CD4-positive, alpha-beta T cell (primary cell): ENCODE measurements at regions of chr3 and their contacts with region 1.

Region 1: GRCh38 chr3:28328188-28329151 is 20.1 kb upstream of the ZCWPW2 start:
- DNase-seq: peak in 3 of 14 experiments; percentile 63 to 68 (median 68)
- ATAC-seq: peak; percentile 43
- H3K4me3 ChIP-seq: no peak overlapping the region
- H3K4me3 Mint-ChIP-seq: no peak overlapping the region
- H3K27ac ChIP-seq: no peak overlapping the region
- H3K27ac Mint-ChIP-seq: no peak overlapping the region
- H3K4me1 ChIP-seq: no peaks in the 10 kb centered on the region
- H3K4me1 Mint-ChIP-seq: peaks cover 20% of the 10 kb centered on the region
- H3K27me3 ChIP-seq: no peaks in the 10 kb centered on the region
- H3K27me3 Mint-ChIP-seq: no peaks in the 10 kb centered on the region
- CTCF ChIP-seq: peak; percentile 83

Region 2: DNA sequence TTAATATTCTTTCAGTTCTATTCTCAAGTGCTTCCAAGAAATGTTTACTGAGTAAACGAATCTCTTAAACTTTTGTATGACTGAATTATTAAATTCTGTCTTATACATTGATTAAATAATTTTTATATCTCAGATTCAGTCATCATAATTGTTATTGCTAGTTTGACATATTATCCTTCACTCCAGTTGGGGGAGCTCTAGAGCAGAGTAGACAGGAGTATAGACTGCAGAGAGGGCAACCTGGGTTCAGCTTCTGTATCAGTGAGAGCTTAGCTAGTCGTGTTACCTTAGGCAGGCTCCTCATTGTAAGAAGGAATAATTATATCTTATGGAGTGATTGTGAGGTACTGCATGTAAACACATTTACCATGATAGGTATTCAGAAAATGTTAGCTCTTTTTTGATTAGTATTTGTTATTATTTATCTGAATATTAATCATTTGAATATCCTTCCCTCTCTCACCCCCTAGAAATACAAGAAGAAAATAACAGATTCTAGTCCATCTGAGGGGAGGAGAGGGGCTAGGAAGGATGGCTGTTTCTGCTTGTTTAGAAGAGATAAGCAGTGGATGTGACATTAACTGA is 10.9 kb before region 1 on chr3:
- CTCF ChIA-PET with region 1: interaction called, 25 read pairs
- POLR2A ChIA-PET with region 1: interaction called, 6 read pairs
- intact Hi-C with region 1: no loop called
- DNase-seq: peak in 8 of 14 experiments; percentile 1 to 77 (median 27)
- ATAC-seq: peak; percentile 99
- H3K4me3 ChIP-seq: no peak overlapping the region
- H3K4me3 Mint-ChIP-seq: no peak overlapping the region
- H3K27ac ChIP-seq: no peak overlapping the region
- H3K27ac Mint-ChIP-seq: peak overlapping the region; percentile 20
- H3K4me1 ChIP-seq: no peaks in the 10 kb centered on the region
- H3K4me1 Mint-ChIP-seq: peaks cover 5% of the 10 kb centered on the region
- H3K27me3 ChIP-seq: no peaks in the 10 kb centered on the region
- H3K27me3 Mint-ChIP-seq: no peaks in the 10 kb centered on the region
- CTCF ChIP-seq: peak; percentile 71